T-cell (primary cell): ENCODE measurements at regions of chr19 and their contacts with region 1.

Region 1: DNA sequence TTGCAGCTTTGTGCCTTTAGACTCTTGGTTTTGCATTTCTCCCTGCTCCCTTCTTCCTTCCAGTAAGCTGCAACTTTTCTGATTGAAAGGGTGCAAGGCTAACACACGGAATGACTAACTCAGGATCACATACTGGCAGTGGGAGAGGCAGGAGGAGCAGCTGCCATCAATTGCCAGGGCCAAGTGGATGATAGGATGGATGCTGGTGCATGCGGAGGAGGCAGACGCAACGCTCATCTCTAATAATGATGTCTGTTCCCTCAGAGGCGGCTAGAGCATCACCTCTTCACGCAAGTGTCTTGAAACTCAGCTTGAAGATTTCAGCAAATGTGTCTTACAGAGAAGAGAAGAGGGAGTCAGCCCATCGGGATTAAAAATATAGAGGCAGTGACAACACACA is 49.5 kb upstream of the TPM4 start:
- DNase-seq: no peak
- ATAC-seq: no peak
- H3K4me3 ChIP-seq: no peak overlapping the region
- H3K4me3 Mint-ChIP-seq: no peak overlapping the region
- H3K27ac ChIP-seq: no peak overlapping the region
- H3K27ac Mint-ChIP-seq: no peak overlapping the region
- H3K4me1 ChIP-seq: no peaks in the 10 kb centered on the region
- H3K4me1 Mint-ChIP-seq: no peaks in the 10 kb centered on the region
- H3K27me3 ChIP-seq: no peaks in the 10 kb centered on the region
- H3K27me3 Mint-ChIP-seq: peaks cover 0 to 3% of the 10 kb centered on the region in 2 donors

Region 2: DNA sequence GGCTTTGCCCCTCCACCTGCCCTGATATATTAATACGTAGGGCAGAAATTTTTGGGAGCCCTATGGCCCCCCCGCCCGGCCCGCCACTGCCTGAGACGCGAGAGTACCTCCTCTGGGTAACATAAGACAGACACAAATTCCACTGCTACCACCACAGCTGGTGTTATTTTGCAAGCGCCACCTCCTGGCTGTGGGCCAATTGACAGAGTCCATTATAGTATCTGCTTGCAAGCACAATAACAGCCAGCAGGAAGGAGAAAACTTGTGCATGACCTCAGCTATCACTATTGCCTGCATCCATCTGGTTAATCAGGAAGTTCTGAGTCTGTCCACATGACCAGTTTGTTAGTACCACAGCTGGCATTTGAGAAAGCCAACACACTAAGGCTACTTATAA is 324.2 kb before region 1 on chr19:
- CTCF ChIA-PET with region 1: no interaction called
- POLR2A ChIA-PET with region 1: no interaction called
- DNase-seq: peak in 25 of 35 experiments; percentile 5 to 37 (median 21)
- ATAC-seq: peak in 1 of 4 experiments; percentile 31
- H3K4me3 ChIP-seq: no peak overlapping the region
- H3K4me3 Mint-ChIP-seq: no peak overlapping the region
- H3K27ac ChIP-seq: no peak overlapping the region
- H3K27ac Mint-ChIP-seq: no peak overlapping the region
- H3K4me1 ChIP-seq: no peaks in the 10 kb centered on the region
- H3K4me1 Mint-ChIP-seq: no peaks in the 10 kb centered on the region
- H3K27me3 ChIP-seq: peaks cover 0 to 30% of the 10 kb centered on the region in 2 experiments
- H3K27me3 Mint-ChIP-seq: peaks cover 40 to 53% of the 10 kb centered on the region in 2 donors

Region 3: DNA sequence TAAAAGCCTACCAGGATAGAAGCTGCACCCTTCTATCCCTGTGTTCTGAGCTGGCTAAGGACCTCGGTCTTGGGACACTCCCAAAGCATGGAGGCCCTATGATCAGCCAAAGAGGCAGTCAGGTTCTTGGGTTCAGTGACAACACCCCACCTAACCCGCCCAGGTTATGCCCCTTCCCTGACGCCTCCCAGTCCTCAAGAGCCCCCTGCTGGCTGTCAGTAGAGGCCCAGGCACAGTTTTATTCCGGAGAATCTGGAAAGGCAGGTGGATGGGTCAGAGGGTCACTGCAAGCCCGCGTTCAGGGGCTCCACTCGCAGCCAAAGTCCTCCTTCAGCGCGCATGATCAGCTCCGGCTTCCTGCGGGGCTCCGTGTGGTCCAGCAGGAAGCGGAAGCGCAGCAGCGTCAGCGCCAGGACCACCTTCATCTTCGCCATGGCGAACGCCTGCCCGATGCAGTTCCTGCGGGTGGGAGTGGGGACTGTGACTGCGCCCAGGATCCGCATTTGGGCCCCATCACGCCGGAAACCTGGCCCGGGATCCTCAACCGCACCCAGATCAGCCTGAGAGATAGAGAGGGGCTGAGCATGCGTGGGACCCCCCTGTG is 266.7 kb before region 1 on chr19:
- CTCF ChIA-PET with region 1: interaction called in 1 of 2 experiments, 13 read pairs
- POLR2A ChIA-PET with region 1: no interaction called
- DNase-seq: no peak
- ATAC-seq: no peak
- H3K4me3 ChIP-seq: no peak overlapping the region
- H3K4me3 Mint-ChIP-seq: no peak overlapping the region
- H3K27ac ChIP-seq: no peak overlapping the region
- H3K27ac Mint-ChIP-seq: no peak overlapping the region
- H3K4me1 ChIP-seq: peaks cover 0 to 2% of the 10 kb centered on the region in 2 experiments
- H3K4me1 Mint-ChIP-seq: peaks cover 0 to 4% (median 0%) of the 10 kb centered on the region in 3 donors
- H3K27me3 ChIP-seq: peaks cover 0 to 26% of the 10 kb centered on the region in 2 experiments
- H3K27me3 Mint-ChIP-seq: peaks cover 65 to 72% of the 10 kb centered on the region in 2 donors